WTC11 (cell line): ENCODE measurements at regions of chr15 and their contacts with region 1.

Region 1: DNA sequence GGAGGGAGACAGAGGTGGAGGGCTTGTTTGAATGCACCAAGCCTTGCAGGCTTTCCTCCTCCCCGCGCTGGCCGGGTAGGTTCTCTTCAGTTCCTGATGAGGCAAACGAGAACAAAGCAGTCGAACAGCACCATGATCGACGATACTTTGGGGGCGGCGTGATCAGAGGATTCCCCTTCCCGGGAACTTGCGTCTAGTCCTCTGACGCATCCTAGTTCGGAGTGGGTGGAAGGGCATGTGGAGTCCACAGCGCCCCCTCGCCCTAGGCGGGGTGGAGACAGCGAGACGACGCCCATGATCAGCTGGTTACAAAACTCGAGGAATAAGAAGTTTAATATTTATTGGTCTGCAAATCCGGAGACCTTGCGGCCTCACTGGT is 452 bp upstream of the SV2B start:
- DNase-seq: peak; percentile 64
- ATAC-seq: peak; percentile 67
- H3K4me3 Mint-ChIP-seq: peak overlapping the region; percentile 77
- H3K27ac Mint-ChIP-seq: no peak overlapping the region
- H3K4me1 Mint-ChIP-seq: peaks cover 18% of the 10 kb centered on the region
- H3K27me3 Mint-ChIP-seq: peaks cover 84% of the 10 kb centered on the region
- CTCF ChIP-seq: no peak

Region 2: DNA sequence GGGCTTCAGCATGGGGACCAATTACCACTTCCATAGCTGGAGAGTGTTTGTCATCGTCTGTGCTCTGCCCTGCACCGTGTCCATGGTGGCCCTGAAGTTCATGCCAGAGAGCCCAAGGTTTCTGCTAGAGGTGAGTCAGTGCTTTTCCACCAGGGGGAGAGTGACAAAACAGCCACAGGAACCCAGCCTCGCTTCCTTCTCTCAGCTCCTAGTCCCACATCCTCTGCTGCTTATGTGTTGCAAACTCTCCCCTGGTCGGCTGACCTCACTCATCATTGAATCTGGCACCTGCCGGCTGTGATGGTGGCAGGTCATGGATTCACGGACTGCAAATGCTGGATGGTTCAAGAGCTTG is 158.8 kb after region 1 on chr15:
- CTCF ChIA-PET with region 1: interaction called, 10 read pairs
- POLR2A ChIA-PET with region 1: no interaction called
- DNase-seq: peak; percentile 18
- ATAC-seq: peak; percentile 91
- H3K4me3 Mint-ChIP-seq: no peak overlapping the region
- H3K27ac Mint-ChIP-seq: no peak overlapping the region
- H3K4me1 Mint-ChIP-seq: no peaks in the 10 kb centered on the region
- H3K27me3 Mint-ChIP-seq: no peaks in the 10 kb centered on the region
- CTCF ChIP-seq: no peak